CD4-positive, alpha-beta T cell (primary cell): ENCODE measurements at regions of chr6 and their contacts with region 1.

Region 1: DNA sequence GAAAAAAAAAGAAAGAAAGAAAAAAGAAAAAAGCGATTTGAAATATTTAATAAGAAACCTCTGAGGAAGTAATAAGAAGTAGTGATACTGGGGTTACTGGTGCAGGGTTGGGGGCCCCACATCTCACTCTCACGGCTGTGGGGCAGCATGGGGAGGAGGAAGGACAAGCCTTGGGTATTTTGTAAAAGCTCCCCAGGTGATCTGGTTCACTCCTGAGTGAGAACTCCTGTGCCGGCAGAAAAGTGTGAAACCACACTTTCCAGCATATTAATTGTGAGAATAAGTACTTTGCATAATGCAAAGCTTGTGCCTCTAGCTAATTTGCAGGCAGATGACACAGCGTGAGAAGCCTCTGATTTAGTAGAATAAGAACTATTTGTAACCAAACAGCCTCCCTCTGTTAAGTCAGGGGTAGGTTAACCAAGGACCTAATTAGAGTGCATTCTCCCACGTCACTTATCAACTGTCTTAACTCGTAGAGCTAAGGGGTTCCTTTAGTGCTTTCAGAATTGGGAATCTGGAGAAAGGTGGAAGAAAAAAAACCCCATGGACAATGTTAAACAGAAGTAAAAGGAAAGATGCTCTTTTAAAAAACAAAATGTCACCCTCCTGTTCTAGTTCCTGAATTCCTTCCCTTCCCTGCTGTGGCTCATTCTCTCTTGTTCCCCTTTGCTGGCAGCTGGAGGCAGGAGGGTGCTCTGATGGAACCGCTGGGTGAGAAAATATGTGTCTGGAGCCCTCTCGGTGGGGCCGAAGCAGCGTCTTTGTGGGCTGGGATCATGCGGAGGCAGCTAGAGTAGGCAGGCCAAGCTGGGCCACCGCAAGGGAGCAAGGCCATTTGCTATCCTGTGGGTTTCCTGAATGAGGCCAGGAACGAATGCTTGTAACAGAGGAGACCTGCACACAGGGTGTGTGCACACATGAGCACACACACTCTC is 108.7 kb downstream of the FYN start:
- DNase-seq: peak in 10 of 14 experiments; percentile 25 to 87 (median 44)
- ATAC-seq: peak; percentile 24
- H3K4me3 ChIP-seq: peak overlapping the region; percentile 19
- H3K4me3 Mint-ChIP-seq: peak overlapping the region; percentile 83
- H3K27ac ChIP-seq: peak overlapping the region; percentile 70 to 71
- H3K27ac Mint-ChIP-seq: peak overlapping the region; percentile 99
- H3K4me1 ChIP-seq: peaks cover 89% of the 10 kb centered on the region
- H3K4me1 Mint-ChIP-seq: peaks cover 99% of the 10 kb centered on the region
- H3K27me3 ChIP-seq: no peaks in the 10 kb centered on the region
- H3K27me3 Mint-ChIP-seq: no peaks in the 10 kb centered on the region
- CTCF ChIP-seq: no peak

Region 2: DNA sequence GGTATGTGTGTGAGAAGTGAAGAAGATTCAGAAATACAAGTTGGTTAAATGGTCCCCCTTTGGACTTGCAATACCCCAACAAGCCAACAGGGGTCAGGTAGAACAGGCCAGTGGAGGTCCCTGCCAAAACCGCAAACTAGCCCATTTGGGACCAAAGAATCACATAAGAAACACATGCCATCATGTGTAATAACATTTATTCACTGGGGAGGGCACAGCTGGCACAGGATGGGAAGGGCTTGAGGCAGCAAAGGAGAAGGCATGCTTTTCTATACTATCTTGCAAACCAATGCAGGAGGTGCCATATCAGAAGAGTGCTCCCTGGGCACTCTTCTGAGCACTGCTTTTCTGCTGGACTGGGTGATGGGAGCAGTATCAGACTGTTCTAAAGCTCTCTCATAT is 42.8 kb before region 1 on chr6:
- CTCF ChIA-PET with region 1: interaction called, 3 read pairs
- POLR2A ChIA-PET with region 1: interaction called, 9 read pairs
- intact Hi-C with region 1: loop called in 1 of 2 experiments (anchors 2 kb)
- DNase-seq: peak in 11 of 14 experiments; percentile 15 to 75 (median 33)
- ATAC-seq: peak; percentile 35
- H3K4me3 ChIP-seq: no peak overlapping the region
- H3K4me3 Mint-ChIP-seq: no peak overlapping the region
- H3K27ac ChIP-seq: no peak overlapping the region
- H3K27ac Mint-ChIP-seq: peak overlapping the region; percentile 93
- H3K4me1 ChIP-seq: peaks cover 67% of the 10 kb centered on the region
- H3K4me1 Mint-ChIP-seq: peaks cover 83% of the 10 kb centered on the region
- H3K27me3 ChIP-seq: no peaks in the 10 kb centered on the region
- H3K27me3 Mint-ChIP-seq: no peaks in the 10 kb centered on the region
- CTCF ChIP-seq: peak; percentile 60

Region 3: DNA sequence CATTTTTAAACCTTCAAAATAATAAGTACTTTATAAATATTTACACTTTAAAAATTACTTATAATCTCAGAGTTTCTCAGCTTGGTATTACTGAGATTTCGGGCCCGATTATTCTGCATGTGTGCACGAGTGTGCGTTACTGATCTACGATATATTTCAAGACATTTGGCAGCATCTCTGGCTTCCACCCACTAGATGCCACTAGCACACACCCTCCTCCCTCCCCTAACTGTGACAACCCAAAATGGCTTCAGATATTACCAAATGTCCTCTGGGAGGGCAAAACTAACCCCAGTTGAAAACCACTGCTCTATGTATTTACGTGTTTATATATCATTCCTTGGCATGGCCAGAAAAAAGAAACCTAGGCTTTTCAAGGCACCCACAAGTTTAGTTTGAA is 12.8 kb after region 1 on chr6:
- CTCF ChIA-PET with region 1: interaction called, 5 read pairs
- POLR2A ChIA-PET with region 1: interaction called, 29 read pairs
- intact Hi-C with region 1: loop called in 1 of 2 experiments (anchors 2 kb)
- DNase-seq: peak in 3 of 14 experiments; percentile 72 to 77 (median 73)
- ATAC-seq: peak; percentile 58
- H3K4me3 ChIP-seq: no peak overlapping the region
- H3K4me3 Mint-ChIP-seq: peak overlapping the region; percentile 59
- H3K27ac ChIP-seq: peak overlapping the region; percentile 34 to 49
- H3K27ac Mint-ChIP-seq: peak overlapping the region; percentile 84
- H3K4me1 ChIP-seq: peaks cover 77% of the 10 kb centered on the region
- H3K4me1 Mint-ChIP-seq: peaks cover 89% of the 10 kb centered on the region
- H3K27me3 ChIP-seq: no peaks in the 10 kb centered on the region
- H3K27me3 Mint-ChIP-seq: no peaks in the 10 kb centered on the region
- CTCF ChIP-seq: peak; percentile 25

Region 4: GRCh38 chr6:111804627-111805235 is 40.2 kb after region 1 on chr6:
- CTCF ChIA-PET with region 1: interaction called, 6 read pairs
- POLR2A ChIA-PET with region 1: interaction called, 10 read pairs
- intact Hi-C with region 1: loop called (anchors 2 to 5 kb)
- DNase-seq: peak; percentile 38 to 91 (median 54)
- ATAC-seq: peak; percentile 71
- H3K4me3 ChIP-seq: peak overlapping the region; percentile 15
- H3K4me3 Mint-ChIP-seq: peak overlapping the region; percentile 67
- H3K27ac ChIP-seq: peak overlapping the region; percentile 55 to 66
- H3K27ac Mint-ChIP-seq: peak overlapping the region; percentile 91
- H3K4me1 ChIP-seq: peaks cover 77% of the 10 kb centered on the region
- H3K4me1 Mint-ChIP-seq: peaks cover 93% of the 10 kb centered on the region
- H3K27me3 ChIP-seq: no peaks in the 10 kb centered on the region
- H3K27me3 Mint-ChIP-seq: no peaks in the 10 kb centered on the region
- CTCF ChIP-seq: no peak

Region 5: DNA sequence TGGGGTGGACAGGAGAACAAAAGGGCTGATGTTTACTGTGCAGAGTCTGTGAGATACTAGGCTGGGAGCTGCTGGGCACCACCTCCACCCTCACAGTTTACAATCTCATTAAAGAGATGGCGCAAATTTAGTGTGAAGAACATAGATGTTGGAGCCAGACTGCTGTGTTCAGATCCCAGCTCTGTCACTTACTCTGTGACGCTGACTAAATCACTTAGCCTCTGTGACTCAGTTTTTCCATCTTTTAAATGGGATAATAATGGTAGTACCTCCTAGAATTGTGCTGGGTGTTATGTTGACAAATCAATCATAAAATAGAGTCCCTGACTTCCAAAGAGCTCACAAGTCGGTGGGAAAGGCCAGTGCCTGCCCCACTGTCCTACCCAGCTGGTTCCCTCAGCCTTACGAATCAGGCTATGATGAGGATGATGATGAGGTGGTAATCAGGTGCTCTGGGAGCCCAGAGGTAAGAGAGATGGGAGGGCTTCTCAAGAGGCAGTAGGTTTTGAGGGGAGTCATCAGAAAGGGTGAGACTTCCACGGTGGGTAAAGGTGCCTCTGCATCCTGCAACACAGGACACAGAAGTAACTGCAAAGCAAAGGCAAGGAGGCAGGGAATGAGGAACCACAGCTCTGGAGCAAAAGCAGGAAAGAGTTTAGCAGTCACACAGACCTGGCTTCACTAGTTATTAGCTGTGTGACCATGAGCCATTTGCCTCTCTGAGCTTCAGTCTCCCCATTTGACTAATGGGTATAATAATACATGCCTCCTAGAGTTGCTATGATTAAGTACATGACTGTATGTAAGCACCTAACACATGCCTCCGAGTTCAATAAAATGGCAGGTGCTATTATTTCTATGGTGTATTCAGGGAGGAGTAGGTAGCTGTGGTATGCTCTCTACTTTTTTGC is 99.9 kb after region 1 on chr6:
- CTCF ChIA-PET with region 1: interaction called, 3 read pairs
- POLR2A ChIA-PET with region 1: interaction called, 3 read pairs
- intact Hi-C with region 1: loop called in 1 of 2 experiments (anchors 5 kb)
- DNase-seq: no peak
- ATAC-seq: no peak
- H3K4me3 ChIP-seq: no peak overlapping the region
- H3K4me3 Mint-ChIP-seq: peak overlapping the region; percentile 71
- H3K27ac ChIP-seq: no peak overlapping the region
- H3K27ac Mint-ChIP-seq: peak overlapping the region; percentile 93
- H3K4me1 ChIP-seq: peaks cover 75% of the 10 kb centered on the region
- H3K4me1 Mint-ChIP-seq: peaks cover 100% of the 10 kb centered on the region
- H3K27me3 ChIP-seq: no peaks in the 10 kb centered on the region
- H3K27me3 Mint-ChIP-seq: no peaks in the 10 kb centered on the region
- CTCF ChIP-seq: no peak

Region 6: GRCh38 chr6:111973118-111973761 is 208.7 kb after region 1 on chr6:
- CTCF ChIA-PET with region 1: no interaction called
- POLR2A ChIA-PET with region 1: no interaction called
- intact Hi-C with region 1: loop called in 1 of 2 experiments (anchors 5 kb)
- DNase-seq: peak; percentile 48 to 92 (median 68)
- ATAC-seq: peak; percentile 90
- H3K4me3 ChIP-seq: peak overlapping the region; percentile 8
- H3K4me3 Mint-ChIP-seq: peak overlapping the region; percentile 68
- H3K27ac ChIP-seq: peak overlapping the region; percentile 82 to 93
- H3K27ac Mint-ChIP-seq: peak overlapping the region; percentile 93
- H3K4me1 ChIP-seq: peaks cover 42% of the 10 kb centered on the region
- H3K4me1 Mint-ChIP-seq: peaks cover 82% of the 10 kb centered on the region
- H3K27me3 ChIP-seq: no peaks in the 10 kb centered on the region
- H3K27me3 Mint-ChIP-seq: no peaks in the 10 kb centered on the region
- CTCF ChIP-seq: no peak